ENCODE measurements at regions of chr17 and their contacts with region 1.

Region 1: GRCh38 chr17:1783834-1784611 is 22.2 kb downstream of the SERPINF1 start:
- DNase-seq: no peak
- ATAC-seq: peak; percentile 86
- H3K4me3 Mint-ChIP-seq: no peak overlapping the region
- H3K27ac Mint-ChIP-seq: peak overlapping the region; percentile 69
- H3K4me1 Mint-ChIP-seq: no peaks in the 10 kb centered on the region
- H3K27me3 Mint-ChIP-seq: no peaks in the 10 kb centered on the region
- CTCF ChIP-seq: 0 out of 2 replicates have a peak, but pooled peaks have one; percentile 15

Region 2: GRCh38 chr17:1769822-1770477 is 14.1 kb before region 1 on chr17:
- CTCF ChIA-PET with region 1: interaction called, 13 read pairs
- POLR2A ChIA-PET with region 1: interaction called, 10 read pairs
- DNase-seq: peak; percentile 65
- ATAC-seq: peak; percentile 87
- H3K4me3 Mint-ChIP-seq: peak overlapping the region; percentile 50
- H3K27ac Mint-ChIP-seq: peak overlapping the region; percentile 93
- H3K4me1 Mint-ChIP-seq: peaks cover 15% of the 10 kb centered on the region
- H3K27me3 Mint-ChIP-seq: no peaks in the 10 kb centered on the region
- CTCF ChIP-seq: no peak

Measured in WTC11 (cell line).